Naive thymus-derived CD8-positive, alpha-beta T cell (primary cell): ENCODE measurements at regions of chr1 and their contacts with region 1.

Region 1: GRCh38 chr1:70354332-70355110 is at the start of gene ANKRD13C:
- DNase-seq: peak; percentile 75 to 98 (median 92)
- ATAC-seq: peak; percentile 86 to 91
- H3K4me3 Mint-ChIP-seq: peak within 1 kb of the TSS; percentile 91 to 99 (median 98)
- H3K27ac Mint-ChIP-seq: peak within 1 kb of the TSS; percentile 94 to 100 (median 99)
- H3K4me1 Mint-ChIP-seq: peaks cover 19 to 53% (median 41%) of the 10 kb centered on the region in 4 donors
- H3K27me3 Mint-ChIP-seq: no peaks in the 10 kb centered on the region
- polyA plus RNA-seq, gene ANKRD13C: 9.2 to 14.9 (median 10.5) TPM

Region 2: DNA sequence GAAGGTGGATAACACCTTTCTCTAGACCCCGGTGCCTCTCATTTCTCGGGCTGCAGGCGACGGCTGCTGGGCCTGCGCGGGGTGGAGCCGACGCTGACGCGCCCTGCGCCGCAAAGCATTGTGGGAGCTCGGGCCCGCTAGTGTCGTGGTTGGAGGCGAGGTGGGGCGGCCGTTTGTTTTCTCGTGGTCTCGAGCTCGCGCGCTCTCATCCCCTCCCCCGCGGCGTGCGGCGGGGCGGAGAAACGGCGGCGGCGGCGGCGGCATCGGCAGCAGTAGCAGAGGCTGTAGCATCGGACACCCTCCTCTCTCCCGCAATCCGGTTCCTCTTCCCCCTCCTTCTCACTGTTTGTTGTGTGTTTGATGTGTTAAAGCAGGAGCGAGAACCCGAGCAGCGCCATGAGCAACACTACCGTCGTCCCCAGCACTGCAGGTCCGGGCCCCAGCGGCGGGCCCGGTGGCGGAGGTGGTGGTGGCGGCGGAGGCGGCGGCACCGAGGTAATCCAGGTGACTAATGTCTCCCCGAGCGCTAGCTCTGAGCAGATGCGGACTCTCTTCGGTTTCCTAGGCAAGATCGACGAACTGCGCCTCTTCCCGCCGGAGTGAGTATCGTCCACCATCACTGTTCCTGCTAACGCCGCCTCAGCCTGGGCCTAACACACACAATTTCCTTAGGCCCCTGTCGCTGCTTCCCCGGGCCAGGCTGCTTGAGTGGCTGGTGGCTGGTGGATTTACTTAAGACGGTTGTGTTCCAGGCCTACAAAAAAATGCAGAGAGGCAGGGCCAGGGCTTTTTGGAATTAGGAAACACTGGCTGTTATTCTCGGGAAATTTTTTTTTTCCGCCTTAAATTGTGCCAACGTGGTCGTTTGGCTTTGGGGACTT is 133.0 kb before region 1 on chr1 and contains the start of gene SRSF11:
- POLR2A ChIA-PET with region 1: interaction called, 22 read pairs
- DNase-seq: peak; percentile 93 to 98 (median 96)
- ATAC-seq: peak; percentile 92 to 94
- H3K4me3 Mint-ChIP-seq: peak within 1 kb of the TSS; percentile 78 to 95 (median 92)
- H3K27ac Mint-ChIP-seq: peak within 1 kb of the TSS; percentile 89 to 98 (median 98)
- H3K4me1 Mint-ChIP-seq: peaks cover 11 to 57% (median 39%) of the 10 kb centered on the region in 4 donors
- H3K27me3 Mint-ChIP-seq: no peaks in the 10 kb centered on the region
- polyA plus RNA-seq, gene SRSF11: 75.7 to 94.6 (median 89.1) TPM